Right ventricle myocardium inferior (tissue), 1 donor: ENCODE measurements at regions of chr5 and their contacts with region 1.

Region 1: DNA sequence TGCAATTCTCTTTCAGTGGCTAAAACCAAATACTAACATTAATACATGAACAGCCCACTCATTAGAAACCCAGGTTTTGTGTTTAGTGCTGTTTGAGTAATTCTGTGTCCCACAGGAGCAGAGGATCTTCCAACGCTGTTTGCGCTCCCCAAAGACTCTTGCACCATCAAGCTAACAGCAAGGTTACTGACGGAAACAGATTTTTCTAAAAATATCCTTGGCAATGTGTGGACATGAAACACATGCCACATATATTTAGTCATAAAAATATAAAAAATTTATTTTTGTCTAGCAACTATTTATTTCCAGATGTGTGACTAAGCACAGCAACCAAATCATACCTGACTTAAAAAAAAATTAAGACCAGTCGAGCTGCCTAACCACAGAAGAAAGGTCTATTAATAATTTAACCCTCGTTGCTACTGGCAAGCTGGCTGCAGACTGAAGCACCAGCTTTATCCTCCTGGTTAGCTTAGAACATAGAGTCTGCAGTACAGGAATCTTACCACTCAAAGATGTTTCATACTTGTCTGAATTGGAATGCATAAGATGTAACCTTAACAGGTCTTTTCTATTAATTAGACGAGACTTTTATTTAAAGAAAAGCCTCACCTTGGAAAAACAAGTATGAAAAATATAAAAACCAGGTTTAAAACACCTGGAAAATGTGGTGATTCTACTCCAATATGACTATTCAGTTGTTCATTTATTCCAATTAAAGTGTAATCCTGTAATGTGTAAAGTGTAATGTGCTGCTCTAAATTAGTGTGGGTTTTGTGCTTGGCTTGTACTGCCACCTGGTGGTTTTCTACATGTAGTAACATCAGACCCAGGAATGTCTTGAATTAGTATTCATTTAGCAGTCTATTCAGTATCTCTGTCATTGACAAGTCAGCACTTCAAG is 272.5 kb downstream of the EPB41L4A start:
- DNase-seq: no peak
- ATAC-seq: peak; percentile 91

Region 2: DNA sequence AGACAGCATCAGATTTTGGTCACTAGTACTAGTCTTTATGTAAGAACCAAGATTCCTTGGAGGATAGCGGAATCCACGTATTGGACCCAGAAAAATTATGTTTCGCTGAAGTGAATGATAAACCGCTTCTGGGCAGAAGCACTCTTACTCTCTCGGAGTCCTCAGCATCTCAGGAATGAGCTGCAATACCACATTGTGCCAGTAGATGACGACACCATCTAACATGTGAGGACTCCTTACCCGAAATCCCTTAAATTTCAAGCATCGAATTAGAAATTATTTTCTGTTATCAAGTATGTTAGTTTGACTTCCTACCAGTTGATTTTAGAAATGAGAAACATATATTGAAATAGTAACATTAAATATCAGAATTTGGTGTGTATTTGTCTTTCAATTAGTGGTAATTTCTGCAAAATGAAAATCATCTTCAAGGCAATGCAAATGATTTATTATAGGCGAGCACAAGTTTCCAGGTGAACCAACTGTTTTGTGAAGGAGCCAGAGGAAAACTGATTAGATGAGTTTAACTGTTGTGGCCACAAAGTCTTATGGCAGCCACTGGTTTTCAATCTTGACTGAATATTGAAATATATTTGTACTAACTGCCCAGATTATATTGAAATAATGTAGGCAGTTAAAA is 988.4 kb before region 1 on chr5:
- intact Hi-C with region 1: loop called (anchors 5 kb)
- DNase-seq: no peak
- ATAC-seq: no peak

Region 3: GRCh38 chr5:111254613-111255012 is 892.0 kb before region 1 on chr5:
- intact Hi-C with region 1: no loop called
- DNase-seq: no peak
- ATAC-seq: no peak

Region 4: DNA sequence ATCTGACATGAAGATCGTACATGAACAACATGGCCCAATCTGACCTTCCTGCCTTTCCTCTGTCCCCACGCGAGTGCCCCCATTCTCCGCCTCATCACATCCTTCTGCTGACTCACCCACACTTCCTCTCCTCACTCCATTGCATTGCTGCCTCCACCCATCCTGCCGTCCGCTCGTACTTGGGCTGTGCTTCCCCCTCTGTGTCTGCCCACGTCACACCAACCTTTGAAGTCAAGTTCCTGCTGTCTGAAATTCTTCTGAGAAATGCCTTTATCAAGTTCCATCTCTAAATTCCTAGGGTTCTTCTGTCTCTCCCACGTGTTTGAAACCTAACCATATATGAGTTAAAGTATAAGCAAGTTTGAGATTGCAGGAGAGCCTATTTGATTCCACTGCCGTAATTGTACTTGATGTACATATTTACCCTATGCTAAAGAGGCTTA is 616.3 kb before region 1 on chr5:
- intact Hi-C with region 1: loop called (anchors 2 kb)
- DNase-seq: peak; percentile 84
- ATAC-seq: peak; percentile 91

Region 5: DNA sequence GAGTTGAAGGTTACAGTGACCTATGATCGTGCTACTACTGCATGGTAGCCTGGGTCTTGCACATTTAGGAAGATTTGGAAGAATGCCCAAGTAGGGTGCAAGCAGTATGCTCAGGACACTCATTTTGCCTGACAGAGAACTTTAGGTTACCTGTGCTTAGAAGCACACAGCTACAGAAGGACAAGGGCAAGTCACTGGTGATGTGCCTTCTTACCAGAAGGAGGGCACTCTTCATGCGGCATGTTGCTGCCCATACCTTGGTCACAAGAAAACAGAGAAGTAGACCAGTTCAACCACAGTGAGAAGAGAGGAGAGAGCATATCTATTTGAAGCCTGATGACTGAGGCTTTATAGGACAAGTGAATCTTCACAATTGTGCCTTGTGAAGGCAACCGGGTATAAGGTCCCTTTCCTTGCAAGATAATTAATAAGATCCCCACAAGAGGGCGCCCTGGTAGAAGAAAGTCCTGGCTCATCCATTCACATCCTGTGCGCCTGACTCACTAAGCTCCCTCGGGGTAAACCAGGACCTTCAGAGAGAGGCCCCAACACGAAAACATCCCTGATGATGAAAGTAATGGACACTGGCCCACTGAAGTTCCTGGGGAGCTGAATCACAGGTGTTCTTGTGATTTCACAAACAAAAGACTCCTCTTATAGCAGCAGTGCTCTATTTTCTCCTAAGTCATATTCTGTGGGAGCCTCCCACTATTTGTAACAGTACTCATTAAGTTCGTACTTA is 596.1 kb before region 1 on chr5:
- intact Hi-C with region 1: loop called (anchors 1 kb)
- DNase-seq: no peak
- ATAC-seq: peak; percentile 91

Region 6: DNA sequence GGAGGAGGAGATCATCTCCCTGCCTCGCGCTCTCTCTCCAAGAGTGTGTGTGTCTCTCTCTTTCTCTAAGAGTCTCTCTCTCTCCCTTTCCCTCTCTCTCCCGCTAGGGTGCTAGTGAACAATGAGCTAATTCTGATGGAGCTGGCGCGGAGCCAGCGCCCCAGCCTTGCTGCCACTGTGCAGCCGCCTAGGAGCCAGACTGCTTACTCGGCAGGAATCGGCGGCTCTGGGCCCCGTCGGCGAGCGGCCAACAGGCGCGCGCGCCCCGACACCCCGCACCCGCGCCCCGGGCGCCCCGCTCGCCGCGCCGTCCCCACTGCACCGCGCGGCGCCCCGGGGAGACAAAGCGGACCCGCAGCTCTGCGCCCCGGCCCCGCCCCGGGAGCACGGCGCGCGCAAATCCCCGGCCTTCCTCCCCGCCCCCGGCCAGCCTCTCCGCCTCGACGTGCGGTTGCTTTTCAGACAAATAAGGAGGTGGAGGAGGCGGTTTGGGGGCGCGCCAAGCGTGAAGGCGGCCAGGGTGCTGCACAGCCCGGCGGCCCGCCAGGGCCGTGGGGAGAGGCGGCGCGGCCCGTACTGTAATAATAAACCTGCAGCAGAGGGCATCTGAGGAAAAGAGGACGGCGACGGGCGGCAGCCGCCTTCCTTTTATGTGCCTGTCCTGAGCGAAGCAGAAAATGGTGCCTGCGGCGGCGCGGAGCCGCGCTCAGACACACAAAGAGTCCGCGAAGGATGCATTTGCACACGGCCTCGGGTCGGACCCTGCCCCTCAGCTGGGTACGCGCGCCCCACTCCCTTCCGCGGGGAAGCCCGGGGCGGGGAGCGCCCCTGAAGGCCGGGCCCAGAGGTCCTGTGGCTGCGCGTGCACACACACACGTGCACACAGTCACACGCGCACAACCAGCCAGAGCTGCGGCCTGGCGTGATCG is 389.0 kb before region 1 on chr5:
- intact Hi-C with region 1: loop called (anchors 5 kb)
- DNase-seq: peak; percentile 96
- ATAC-seq: peak; percentile 92

Region 7: GRCh38 chr5:111834926-111835598 is 311.5 kb before region 1 on chr5:
- intact Hi-C with region 1: loop called (anchors 5 kb)
- DNase-seq: no peak
- ATAC-seq: no peak

Region 8: DNA sequence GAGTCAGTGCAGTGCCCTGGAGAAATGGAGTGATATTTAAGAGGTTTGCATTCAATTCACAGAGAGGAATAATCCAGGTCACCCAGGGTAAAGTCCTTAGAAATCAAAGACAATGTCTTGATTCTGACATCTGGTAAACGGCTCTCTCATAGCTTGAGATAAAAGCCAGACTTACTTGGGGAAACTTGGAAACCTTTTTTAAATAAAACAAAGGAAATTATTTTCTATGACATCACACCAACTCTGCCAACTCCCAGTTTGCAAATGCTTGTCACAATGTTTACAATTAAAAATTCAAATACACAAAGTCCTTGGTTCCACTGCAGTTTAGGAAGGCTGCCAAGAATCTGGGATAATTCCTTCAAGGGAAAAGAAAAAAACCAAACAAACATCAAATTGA is 134.5 kb before region 1 on chr5:
- intact Hi-C with region 1: loop called (anchors 10 kb)
- DNase-seq: no peak
- ATAC-seq: no peak

Region 9: DNA sequence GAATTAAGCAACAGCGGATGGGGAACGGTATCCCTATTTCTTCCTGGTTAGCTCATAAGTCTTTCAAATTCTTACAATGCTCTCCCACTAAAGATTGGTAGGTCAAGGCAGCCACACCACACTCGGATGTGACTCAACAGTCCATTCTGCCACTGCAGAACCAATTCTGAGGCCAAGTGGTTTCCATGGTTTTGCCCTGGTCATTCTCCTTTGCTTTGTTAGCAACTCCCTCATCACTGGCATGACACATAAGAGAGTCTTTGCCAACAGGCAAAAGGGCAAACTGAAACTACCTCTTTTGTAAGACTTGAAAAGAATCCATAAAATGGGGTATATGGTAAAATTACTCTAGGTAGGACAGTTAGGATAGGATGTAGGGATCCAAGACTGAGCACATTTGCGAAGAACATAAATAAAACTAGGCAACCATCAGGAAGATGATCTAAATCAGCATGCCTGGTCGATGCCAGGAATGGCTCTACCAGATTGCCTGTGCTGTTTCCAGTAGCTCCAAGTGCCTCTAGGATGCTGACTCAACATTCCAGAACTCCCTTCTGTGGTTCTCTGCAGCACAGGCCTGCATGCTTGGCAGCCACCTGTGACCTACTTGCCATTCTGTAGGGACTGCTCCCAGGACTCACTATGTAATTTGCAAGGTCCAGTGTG is 935.4 kb after region 1 on chr5:
- intact Hi-C with region 1: no loop called
- DNase-seq: no peak
- ATAC-seq: no peak